ENCODE measurements at regions of chr11 and their contacts with region 1.

Region 1: GRCh38 chr11:78139422-78140391 is at the start of gene ALG8:
- DNase-seq: peak; percentile 95 to 98 (median 96)
- ATAC-seq: peak; percentile 97 to 99 (median 99)
- H3K4me3 ChIP-seq: peak within 1 kb of the TSS; percentile 47 to 88 (median 73)
- H3K27ac ChIP-seq: peak within 1 kb of the TSS; percentile 20 to 79 (median 74)
- H3K4me1 ChIP-seq: peaks cover 0 to 28% (median 14%) of the 10 kb centered on the region in 12 donors
- H3K27me3 ChIP-seq: no peaks in the 10 kb centered on the region
- CTCF ChIP-seq: no peak
- POLR2A ChIP-seq: peak in 1 of 2 donors; percentile 59
- total RNA-seq, gene ALG8: 14.1 to 24.6 (median 17.7) TPM

Region 2: GRCh38 chr11:78030429-78031325 is 109.0 kb before region 1 on chr11:
- intact Hi-C with region 1: no loop called
- DNase-seq: peak; percentile 58 to 80 (median 69)
- ATAC-seq: peak; percentile 94 to 96 (median 95)
- H3K4me3 ChIP-seq: no peak overlapping the region
- H3K27ac ChIP-seq: no peak overlapping the region
- H3K4me1 ChIP-seq: peaks cover 0 to 10% (median 6%) of the 10 kb centered on the region in 12 donors
- H3K27me3 ChIP-seq: no peaks in the 10 kb centered on the region
- CTCF ChIP-seq: no peak
- POLR2A ChIP-seq: no peak

Region 3: DNA sequence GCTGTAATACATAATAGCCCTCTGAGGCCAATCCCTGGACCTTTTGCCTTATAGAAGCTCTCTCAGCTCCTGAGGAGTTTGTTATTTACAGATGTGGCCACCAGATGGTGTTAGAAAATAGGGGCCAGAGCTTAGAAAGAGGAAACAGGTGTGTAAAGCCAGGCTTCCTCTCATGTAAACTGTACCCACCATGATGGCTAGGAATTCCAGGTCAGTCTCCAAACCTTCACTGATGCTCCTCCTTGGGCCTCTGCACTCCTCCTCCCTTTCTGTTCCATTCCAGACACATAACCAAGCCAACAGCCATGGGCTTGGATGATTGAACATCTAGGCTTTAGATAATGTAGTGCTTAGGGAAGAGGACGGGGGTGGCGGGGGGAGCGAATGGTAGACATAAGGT is 88.8 kb after region 1 on chr11:
- intact Hi-C with region 1: no loop called
- DNase-seq: peak in 1 of 5 donors; percentile 32
- ATAC-seq: peak in 3 of 4 donors; percentile 53 to 70 (median 55)
- H3K4me3 ChIP-seq: no peak overlapping the region
- H3K27ac ChIP-seq: no peak overlapping the region
- H3K4me1 ChIP-seq: peaks cover 0 to 41% (median 24%) of the 10 kb centered on the region in 12 donors
- H3K27me3 ChIP-seq: no peaks in the 10 kb centered on the region
- CTCF ChIP-seq: peak in 11 of 12 donors; percentile 33 to 73 (median 65)
- POLR2A ChIP-seq: no peak

Region 4: DNA sequence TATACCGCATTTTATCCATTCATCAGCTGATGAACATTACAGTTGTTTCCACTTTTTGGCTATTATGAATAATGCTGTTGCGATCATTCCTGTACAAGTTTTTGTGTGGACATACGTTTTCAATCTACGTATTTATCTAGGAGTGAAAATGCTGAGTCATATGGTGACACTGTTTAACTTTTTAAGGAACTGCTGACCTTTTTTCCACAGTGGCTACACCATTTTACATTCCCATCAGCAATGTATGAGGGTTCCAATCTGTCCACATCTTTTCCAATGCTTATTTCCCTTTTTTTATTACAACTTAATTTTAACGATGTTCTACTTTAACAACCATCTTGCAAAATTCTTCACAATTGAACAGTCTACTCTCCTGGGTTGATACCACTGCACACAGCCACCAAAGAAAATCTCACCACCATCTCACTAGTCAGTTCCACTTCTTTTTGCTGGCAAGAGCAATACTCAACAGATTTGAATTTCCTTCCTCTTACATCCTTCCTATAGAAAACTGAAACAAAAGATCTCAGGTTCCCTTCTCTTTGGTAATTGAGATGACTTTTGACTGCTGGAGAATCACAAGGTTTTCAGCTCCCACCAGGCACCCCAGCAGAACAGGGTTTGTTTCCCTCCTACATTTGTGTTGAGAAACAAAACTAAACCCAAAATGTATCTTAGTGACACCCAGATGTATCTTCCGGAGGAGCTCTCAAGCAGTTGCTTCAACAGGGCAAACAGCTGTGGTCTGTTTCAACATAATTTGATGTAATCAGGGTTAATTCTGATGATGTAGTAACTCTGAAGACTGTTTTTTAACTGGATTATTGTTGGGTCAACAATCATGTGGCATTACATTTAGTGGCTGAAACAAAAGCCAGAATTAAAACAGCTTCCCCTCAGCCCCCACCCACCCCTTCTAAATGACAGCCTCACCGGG is 284.9 kb after region 1 on chr11:
- intact Hi-C with region 1: loop called in 6 of 10 experiments (anchors 5 to 10 kb)
- DNase-seq: no peak
- ATAC-seq: peak in 1 of 4 donors; percentile 3
- H3K4me3 ChIP-seq: peak overlapping the region in 1 of 12 donors; percentile 6
- H3K27ac ChIP-seq: peak overlapping the region in 6 of 12 donors; percentile 5 to 83 (median 28)
- H3K4me1 ChIP-seq: peaks cover 0 to 65% (median 14%) of the 10 kb centered on the region in 12 donors
- H3K27me3 ChIP-seq: no peaks in the 10 kb centered on the region
- CTCF ChIP-seq: no peak
- POLR2A ChIP-seq: no peak